Activated T-helper 1 cell treated with anti-CD3 and anti-CD28 coated beads, Interleukin-12 subunit alpha, Interleukin-12 subunit beta, Interleukin-2, Interleukin-4 antibody, amounts not matched to agents 30 ng/mL and 10 ng/mL and 1 ng/mL, durations not matched to agents 14 hours and 24 hours and 36 hours (primary cell): ENCODE measurements at regions of chr7 and their contacts with region 1.

Region 1: GRCh38 chr7:55255496-55256435 is 109.4 kb upstream of the LANCL2 start:
- DNase-seq: peak; percentile 57
- H3K4me3 Mint-ChIP-seq: peak overlapping the region; percentile 85
- H3K27ac Mint-ChIP-seq: peak overlapping the region; percentile 53
- H3K4me1 Mint-ChIP-seq: peaks cover 12% of the 10 kb centered on the region
- H3K27me3 Mint-ChIP-seq: peaks cover 51% of the 10 kb centered on the region

Region 2: GRCh38 chr7:54773472-54774399 is 482.0 kb before region 1 on chr7:
- intact Hi-C with region 1: loop called (anchors 1 kb)
- DNase-seq: peak; percentile 53
- H3K4me3 Mint-ChIP-seq: peak overlapping the region; percentile 70
- H3K27ac Mint-ChIP-seq: no peak overlapping the region
- H3K4me1 Mint-ChIP-seq: peaks cover 12% of the 10 kb centered on the region
- H3K27me3 Mint-ChIP-seq: peaks cover 27% of the 10 kb centered on the region

Region 3: DNA sequence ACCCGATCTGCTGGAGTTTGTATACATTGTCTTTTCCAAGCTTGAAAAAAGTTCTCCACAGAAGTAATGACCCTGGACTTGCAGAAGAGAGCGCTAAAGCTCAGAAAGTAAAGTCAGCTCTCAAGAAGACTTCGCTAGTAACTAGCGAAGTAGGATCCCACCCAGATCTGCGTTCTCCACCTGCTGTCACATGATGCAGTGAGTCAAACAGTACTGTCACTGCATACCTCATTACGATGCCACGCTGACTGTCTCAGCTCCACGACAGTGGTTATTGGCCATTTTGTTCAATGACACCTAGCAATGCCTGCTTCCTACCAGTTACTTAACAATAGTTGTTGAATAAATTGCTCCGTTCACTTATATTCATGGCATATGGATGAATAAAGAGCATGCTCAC is 467.1 kb before region 1 on chr7:
- intact Hi-C with region 1: loop called (anchors 1 kb)
- DNase-seq: no peak
- H3K4me3 Mint-ChIP-seq: no peak overlapping the region
- H3K27ac Mint-ChIP-seq: no peak overlapping the region
- H3K4me1 Mint-ChIP-seq: peaks cover 5% of the 10 kb centered on the region
- H3K27me3 Mint-ChIP-seq: peaks cover 15% of the 10 kb centered on the region

Region 4: GRCh38 chr7:54874804-54875203 is 381.0 kb before region 1 on chr7:
- intact Hi-C with region 1: loop called (anchors 1 kb)
- DNase-seq: no peak
- H3K4me3 Mint-ChIP-seq: no peak overlapping the region
- H3K27ac Mint-ChIP-seq: no peak overlapping the region
- H3K4me1 Mint-ChIP-seq: no peaks in the 10 kb centered on the region
- H3K27me3 Mint-ChIP-seq: peaks cover 7% of the 10 kb centered on the region

Region 5: GRCh38 chr7:55132890-55133551 is 122.7 kb before region 1 on chr7:
- intact Hi-C with region 1: loop called (anchors 10 kb)
- DNase-seq: no peak
- H3K4me3 Mint-ChIP-seq: no peak overlapping the region
- H3K27ac Mint-ChIP-seq: peak overlapping the region; percentile 37
- H3K4me1 Mint-ChIP-seq: peaks cover 22% of the 10 kb centered on the region
- H3K27me3 Mint-ChIP-seq: peaks cover 4% of the 10 kb centered on the region